Sigmoid colon (tissue), 7 donors: ENCODE measurements at regions of chr3 and their contacts with region 1.

Region 1: GRCh38 chr3:15205934-15206661 is at the start of gene CAPN7:
- DNase-seq: peak; percentile 98
- H3K4me3 ChIP-seq: peak within 1 kb of the TSS; percentile 90 to 96 (median 94)
- H3K27ac ChIP-seq: peak within 1 kb of the TSS; percentile 97 to 99 (median 98)
- H3K4me1 ChIP-seq: peaks cover 0 to 38% (median 30%) of the 10 kb centered on the region in 4 donors
- H3K27me3 ChIP-seq: no peaks in the 10 kb centered on the region
- CTCF ChIP-seq: peak; percentile 7 to 47 (median 40)
- EP300 ChIP-seq: no peak
- POLR2A ChIP-seq: peak; percentile 35 to 60
- total RNA-seq, gene CAPN7: 52.8 to 70.8 (median 58.6) TPM

Region 2: GRCh38 chr3:15108082-15108545 is 98.0 kb before region 1 on chr3:
- intact Hi-C with region 1: loop called (anchors 2 kb)
- DNase-seq: peak; percentile 87
- H3K4me3 ChIP-seq: no peak overlapping the region
- H3K27ac ChIP-seq: no peak overlapping the region
- H3K4me1 ChIP-seq: peaks cover 0 to 10% (median 7%) of the 10 kb centered on the region in 4 donors
- H3K27me3 ChIP-seq: no peaks in the 10 kb centered on the region
- CTCF ChIP-seq: peak; percentile 64 to 89 (median 78)
- EP300 ChIP-seq: no peak
- POLR2A ChIP-seq: no peak

Region 3: DNA sequence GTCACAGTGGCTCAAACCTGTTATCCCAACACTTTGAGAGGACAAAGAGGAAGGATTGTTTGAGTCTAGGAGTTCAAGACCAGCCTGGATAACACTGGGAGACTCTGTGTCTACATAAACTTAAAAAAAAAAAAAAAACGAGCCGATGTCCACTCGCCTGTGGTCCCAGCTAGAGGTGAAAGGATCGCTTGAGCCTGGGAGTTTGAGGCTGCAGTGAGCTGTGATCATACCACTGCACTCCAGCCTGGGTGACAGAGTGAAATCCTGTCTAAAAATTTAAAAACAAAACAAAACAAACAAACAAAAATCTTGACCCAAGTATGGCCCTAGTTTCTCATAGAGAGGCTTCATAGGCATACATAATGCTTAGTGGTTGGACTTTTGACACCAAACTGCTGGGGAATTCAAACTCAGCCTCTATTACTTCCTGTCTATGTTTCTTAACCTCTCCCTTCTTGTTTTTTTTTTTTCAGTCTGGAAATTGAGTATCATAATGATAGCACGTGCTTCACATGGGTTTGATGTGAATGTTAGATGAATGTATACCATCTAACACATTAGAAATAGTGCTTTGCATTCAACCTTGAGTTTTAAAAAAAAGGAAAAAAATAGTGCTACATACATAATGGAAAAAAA is 46.5 kb before region 1 on chr3:
- intact Hi-C with region 1: no loop called
- DNase-seq: no peak
- H3K4me3 ChIP-seq: no peak overlapping the region
- H3K27ac ChIP-seq: no peak overlapping the region
- H3K4me1 ChIP-seq: no peaks in the 10 kb centered on the region
- H3K27me3 ChIP-seq: peaks cover 0 to 21% (median 11%) of the 10 kb centered on the region in 3 donors
- CTCF ChIP-seq: no peak
- EP300 ChIP-seq: no peak
- POLR2A ChIP-seq: no peak

Region 4: DNA sequence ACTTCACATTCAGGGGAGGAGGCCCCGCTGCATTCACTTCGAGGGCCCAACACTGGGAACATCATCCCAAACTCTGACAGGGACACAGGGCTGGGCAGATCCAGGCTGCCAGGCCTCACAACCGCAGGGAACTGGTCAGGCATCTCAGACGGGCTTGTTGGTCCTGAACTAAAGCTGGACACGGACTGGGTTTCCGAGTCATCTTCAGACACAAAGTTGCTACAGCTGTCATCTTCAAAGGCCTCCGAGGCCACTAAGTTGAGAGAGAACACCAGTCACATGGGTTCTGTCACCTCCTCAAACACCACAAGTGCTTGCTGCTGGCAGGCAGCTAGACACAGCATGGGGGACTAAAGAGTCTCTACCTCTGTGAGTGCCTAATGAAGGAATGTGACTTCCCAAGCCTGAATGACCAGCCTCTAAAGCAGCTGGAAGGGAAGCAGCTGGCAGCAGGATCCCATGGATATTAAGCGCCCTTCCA is 50.8 kb after region 1 on chr3:
- intact Hi-C with region 1: loop called (anchors 5 kb)
- DNase-seq: no peak
- H3K4me3 ChIP-seq: no peak overlapping the region
- H3K27ac ChIP-seq: peak overlapping the region in 1 of 4 donors; percentile 12
- H3K4me1 ChIP-seq: no peaks in the 10 kb centered on the region
- H3K27me3 ChIP-seq: no peaks in the 10 kb centered on the region
- CTCF ChIP-seq: no peak
- EP300 ChIP-seq: no peak
- POLR2A ChIP-seq: no peak

Region 5: DNA sequence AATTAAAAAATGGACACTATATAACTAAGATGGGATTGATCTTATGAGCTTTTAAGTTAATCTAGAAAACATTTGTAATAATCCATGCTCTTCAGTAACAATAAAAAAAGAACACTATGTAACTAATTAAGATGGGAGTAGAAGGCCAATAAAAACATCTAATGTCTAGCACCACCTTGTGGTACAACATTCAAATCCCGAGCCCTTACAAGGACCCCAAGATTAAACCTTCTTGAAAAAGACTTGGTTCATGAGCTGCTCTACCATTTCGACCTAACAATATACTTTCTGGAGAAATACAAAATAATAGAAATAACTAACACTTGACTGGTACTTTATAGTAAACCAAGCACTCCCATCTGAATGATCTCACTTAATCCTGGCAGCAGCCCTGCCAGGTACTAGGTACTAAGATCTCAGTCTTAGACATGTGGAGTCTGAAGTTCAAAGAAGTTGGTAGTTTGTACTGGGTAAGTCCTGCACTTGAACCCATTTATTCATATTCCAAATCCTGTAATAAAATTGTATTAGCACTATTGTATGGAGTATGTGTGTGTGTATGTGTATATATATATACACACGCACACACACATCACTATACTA is 199.5 kb after region 1 on chr3:
- intact Hi-C with region 1: loop called (anchors 5 kb)
- DNase-seq: no peak
- H3K4me3 ChIP-seq: no peak overlapping the region
- H3K27ac ChIP-seq: no peak overlapping the region
- H3K4me1 ChIP-seq: no peaks in the 10 kb centered on the region
- H3K27me3 ChIP-seq: no peaks in the 10 kb centered on the region
- CTCF ChIP-seq: peak in 3 of 4 experiments; percentile 30 to 55 (median 33)
- EP300 ChIP-seq: no peak
- POLR2A ChIP-seq: no peak